ENCODE measurements at regions of chr1 and their contacts with region 1.

Region 1: DNA sequence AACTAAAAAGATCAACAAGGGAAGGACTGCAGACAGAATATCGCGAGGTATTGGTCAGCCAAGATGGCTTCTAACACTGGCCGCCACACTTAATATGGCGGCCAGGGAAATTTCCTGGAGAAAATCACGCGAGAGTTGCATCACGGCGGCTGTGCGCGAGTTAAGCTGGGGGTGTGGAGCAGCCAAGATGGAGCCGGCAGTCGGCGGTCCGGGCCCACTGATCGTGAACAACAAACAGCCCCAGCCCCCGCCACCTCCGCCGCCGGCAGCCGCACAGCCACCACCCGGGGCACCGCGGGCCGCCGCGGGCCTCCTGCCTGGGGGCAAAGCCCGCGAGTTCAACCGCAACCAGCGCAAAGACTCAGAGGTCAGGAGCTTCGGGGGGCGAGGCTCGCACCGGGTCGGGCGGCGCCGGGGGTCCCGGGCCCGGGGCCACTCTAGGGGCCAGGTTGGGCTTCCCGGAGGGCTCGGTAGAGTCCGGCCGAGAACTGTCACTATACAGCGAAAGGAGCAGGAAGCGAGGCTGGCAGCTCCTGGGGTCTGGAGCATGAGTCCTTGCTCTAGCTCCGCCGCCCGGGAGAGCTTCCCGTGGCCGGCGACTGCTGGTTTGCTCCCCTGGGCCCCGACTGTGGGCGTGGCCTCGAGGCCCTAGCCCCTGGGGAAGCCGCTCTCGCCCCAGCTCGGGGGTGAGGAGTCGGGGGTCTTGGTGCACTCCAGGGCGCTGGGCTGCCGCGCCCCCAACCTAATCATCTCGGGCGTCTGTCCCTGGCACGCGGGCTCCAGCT is at the start of gene STRIP1:
- DNase-seq: peak; percentile 96
- ATAC-seq: peak; percentile 93
- H3K4me3 ChIP-seq: peak within 1 kb of the TSS; percentile 71 to 99 (median 93)
- H3K4me3 Mint-ChIP-seq: peak within 1 kb of the TSS; percentile 97
- H3K27ac ChIP-seq: peak within 1 kb of the TSS; percentile 76 to 95
- H3K27ac Mint-ChIP-seq: peak within 1 kb of the TSS; percentile 93
- H3K4me1 ChIP-seq: peaks cover 25 to 31% of the 10 kb centered on the region in 2 donors
- H3K4me1 Mint-ChIP-seq: peaks cover 43% of the 10 kb centered on the region
- H3K27me3 ChIP-seq: no peaks in the 10 kb centered on the region
- H3K27me3 Mint-ChIP-seq: no peaks in the 10 kb centered on the region
- CTCF ChIP-seq: no peak
- total RNA-seq, gene STRIP1: 97.5 and 105 TPM in 2 replicates

Region 2: GRCh38 chr1:109548321-109549267 is 486.0 kb before region 1 on chr1 and contains the start of gene GNAI3:
- CTCF ChIA-PET with region 1: interaction called, 5 read pairs
- POLR2A ChIA-PET with region 1: interaction called, 3 read pairs
- intact Hi-C with region 1: loop called (anchors 1 kb)
- DNase-seq: peak; percentile 97
- ATAC-seq: peak; percentile 87
- H3K4me3 ChIP-seq: peak within 1 kb of the TSS; percentile 84 to 95 (median 92)
- H3K4me3 Mint-ChIP-seq: peak within 1 kb of the TSS; percentile 99
- H3K27ac ChIP-seq: peak within 1 kb of the TSS; percentile 93 to 96
- H3K27ac Mint-ChIP-seq: peak within 1 kb of the TSS; percentile 99
- H3K4me1 ChIP-seq: peaks cover 25 to 33% of the 10 kb centered on the region in 2 donors
- H3K4me1 Mint-ChIP-seq: peaks cover 55% of the 10 kb centered on the region
- H3K27me3 ChIP-seq: no peaks in the 10 kb centered on the region
- H3K27me3 Mint-ChIP-seq: no peaks in the 10 kb centered on the region
- CTCF ChIP-seq: no peak
- total RNA-seq, gene GNAI3: 8.5 and 8.8 TPM in 2 replicates

Region 3: DNA sequence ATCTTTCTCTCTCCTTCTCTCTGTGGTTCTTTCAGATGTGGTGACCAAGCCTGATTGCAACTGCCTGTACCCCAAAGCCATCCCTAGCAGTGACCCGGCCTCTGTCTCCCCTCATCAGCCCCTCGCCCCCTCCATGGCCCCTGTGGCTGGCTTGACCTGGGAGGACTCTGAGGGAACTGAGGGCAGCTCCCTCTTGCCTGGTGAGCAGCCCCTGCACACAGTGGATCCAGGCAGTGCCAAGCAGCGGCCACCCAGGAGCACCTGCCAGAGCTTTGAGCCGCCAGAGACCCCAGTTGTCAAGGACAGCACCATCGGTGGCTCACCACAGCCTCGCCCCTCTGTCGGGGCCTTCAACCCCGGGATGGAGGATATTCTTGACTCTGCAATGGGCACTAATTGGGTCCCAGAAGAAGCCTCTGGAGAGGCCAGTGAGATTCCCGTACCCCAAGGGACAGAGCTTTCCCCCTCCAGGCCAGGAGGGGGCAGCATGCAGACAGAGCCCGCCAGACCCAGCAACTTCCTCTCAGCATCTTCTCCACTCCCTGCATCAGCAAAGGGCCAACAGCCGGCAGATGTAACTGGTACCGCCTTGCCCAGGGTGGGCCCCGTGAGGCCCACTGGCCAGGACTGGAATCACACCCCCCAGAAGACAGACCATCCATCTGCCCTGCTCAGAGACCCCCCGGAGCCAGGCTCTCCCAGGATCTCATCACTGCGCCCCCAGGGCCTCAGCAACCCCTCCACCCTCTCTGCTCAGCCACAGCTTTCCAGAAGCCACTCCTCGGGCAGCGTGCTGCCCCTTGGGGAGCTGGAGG is 111.3 kb before region 1 on chr1:
- CTCF ChIA-PET with region 1: no interaction called
- POLR2A ChIA-PET with region 1: no interaction called
- intact Hi-C with region 1: no loop called
- DNase-seq: no peak
- ATAC-seq: no peak
- H3K4me3 ChIP-seq: no peak overlapping the region
- H3K4me3 Mint-ChIP-seq: no peak overlapping the region
- H3K27ac ChIP-seq: no peak overlapping the region
- H3K27ac Mint-ChIP-seq: no peak overlapping the region
- H3K4me1 ChIP-seq: no peaks in the 10 kb centered on the region
- H3K4me1 Mint-ChIP-seq: no peaks in the 10 kb centered on the region
- H3K27me3 ChIP-seq: no peaks in the 10 kb centered on the region
- H3K27me3 Mint-ChIP-seq: peaks cover 3% of the 10 kb centered on the region
- CTCF ChIP-seq: no peak

Region 4: GRCh38 chr1:109993885-109994284 is 40.8 kb before region 1 on chr1:
- CTCF ChIA-PET with region 1: no interaction called
- POLR2A ChIA-PET with region 1: no interaction called
- intact Hi-C with region 1: no loop called
- DNase-seq: no peak
- ATAC-seq: no peak
- H3K4me3 ChIP-seq: no peak overlapping the region
- H3K4me3 Mint-ChIP-seq: no peak overlapping the region
- H3K27ac ChIP-seq: no peak overlapping the region
- H3K27ac Mint-ChIP-seq: no peak overlapping the region
- H3K4me1 ChIP-seq: peaks cover 4 to 7% of the 10 kb centered on the region in 2 donors
- H3K4me1 Mint-ChIP-seq: peaks cover 21% of the 10 kb centered on the region
- H3K27me3 ChIP-seq: no peaks in the 10 kb centered on the region
- H3K27me3 Mint-ChIP-seq: no peaks in the 10 kb centered on the region
- CTCF ChIP-seq: no peak

Region 5: DNA sequence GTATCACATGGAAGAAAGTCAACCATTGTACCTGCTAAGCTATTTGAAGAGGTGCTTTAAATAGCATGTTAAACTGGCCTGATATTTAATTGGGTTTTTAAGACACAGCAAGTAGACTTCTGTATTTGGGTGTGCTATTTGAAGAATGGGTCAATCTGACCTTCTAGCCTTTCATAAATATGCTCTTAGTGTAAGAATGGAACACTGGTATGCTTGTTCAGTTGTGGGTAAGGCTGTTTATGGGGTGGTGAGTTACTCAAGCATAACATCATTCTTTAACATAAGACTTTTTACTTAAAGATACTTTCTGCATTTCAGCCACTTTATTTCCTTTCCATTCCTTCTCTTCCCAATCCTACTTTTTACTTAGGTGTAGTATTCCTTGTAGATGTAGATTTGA is 28.7 kb before region 1 on chr1:
- CTCF ChIA-PET with region 1: interaction called, 52 read pairs
- POLR2A ChIA-PET with region 1: interaction called, 26 read pairs
- intact Hi-C with region 1: loop called (anchors 1 kb)
- DNase-seq: no peak
- ATAC-seq: no peak
- H3K4me3 ChIP-seq: no peak overlapping the region
- H3K4me3 Mint-ChIP-seq: no peak overlapping the region
- H3K27ac ChIP-seq: no peak overlapping the region
- H3K27ac Mint-ChIP-seq: peak overlapping the region; percentile 56
- H3K4me1 ChIP-seq: peaks cover 17% of the 10 kb centered on the region in 2 donors
- H3K4me1 Mint-ChIP-seq: peaks cover 47% of the 10 kb centered on the region
- H3K27me3 ChIP-seq: no peaks in the 10 kb centered on the region
- H3K27me3 Mint-ChIP-seq: no peaks in the 10 kb centered on the region
- CTCF ChIP-seq: no peak

Region 6: DNA sequence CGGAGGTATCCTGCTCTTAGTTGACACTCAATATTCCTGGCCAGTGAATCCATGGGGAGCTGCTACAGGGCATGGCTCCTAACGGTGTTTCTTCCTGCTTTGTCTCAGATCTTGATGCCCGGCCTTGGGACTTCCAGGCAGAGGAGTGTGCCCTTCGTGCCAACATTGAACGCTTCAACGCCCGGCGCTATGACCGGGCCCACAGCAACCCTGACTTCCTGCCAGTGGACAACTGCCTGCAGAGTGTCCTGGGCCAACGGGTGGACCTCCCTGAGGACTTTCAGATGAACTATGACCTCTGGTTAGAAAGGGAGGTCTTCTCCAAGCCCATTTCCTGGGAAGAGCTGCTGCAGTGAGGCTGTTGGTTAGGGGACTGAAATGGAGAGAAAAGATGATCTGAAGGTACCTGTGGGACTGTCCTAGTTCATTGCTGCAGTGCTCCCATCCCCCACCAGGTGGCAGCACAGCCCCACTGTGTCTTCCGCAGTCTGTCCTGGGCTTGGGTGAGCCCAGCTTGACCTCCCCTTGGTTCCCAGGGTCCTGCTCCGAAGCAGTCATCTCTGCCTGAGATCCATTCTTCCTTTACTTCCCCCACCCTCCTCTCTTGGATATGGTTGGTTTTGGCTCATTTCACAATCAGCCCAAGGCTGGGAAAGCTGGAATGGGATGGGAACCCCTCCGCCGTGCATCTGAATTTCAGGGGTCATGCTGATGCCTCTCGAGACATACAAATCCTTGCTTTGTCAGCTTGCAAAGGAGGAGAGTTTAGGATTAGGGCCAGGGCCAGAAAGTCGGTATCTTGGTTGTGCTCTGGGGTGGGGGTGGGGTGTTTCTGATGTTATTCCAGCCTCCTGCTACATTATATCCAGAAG is 19.1 kb after region 1 on chr1:
- CTCF ChIA-PET with region 1: interaction called, 67 read pairs
- POLR2A ChIA-PET with region 1: interaction called, 5 read pairs
- intact Hi-C with region 1: no loop called
- DNase-seq: peak; percentile 74
- ATAC-seq: peak; percentile 77
- H3K4me3 ChIP-seq: no peak overlapping the region
- H3K4me3 Mint-ChIP-seq: no peak overlapping the region
- H3K27ac ChIP-seq: no peak overlapping the region
- H3K27ac Mint-ChIP-seq: peak overlapping the region; percentile 21
- H3K4me1 ChIP-seq: no peaks in the 10 kb centered on the region
- H3K4me1 Mint-ChIP-seq: no peaks in the 10 kb centered on the region
- H3K27me3 ChIP-seq: no peaks in the 10 kb centered on the region
- H3K27me3 Mint-ChIP-seq: no peaks in the 10 kb centered on the region
- CTCF ChIP-seq: peak; percentile 97

Region 7: GRCh38 chr1:110407260-110408210 is 372.9 kb after region 1 on chr1 and contains the start of gene LAMTOR5:
- CTCF ChIA-PET with region 1: no interaction called
- POLR2A ChIA-PET with region 1: no interaction called
- intact Hi-C with region 1: loop called (anchors 1 kb)
- DNase-seq: peak; percentile 94
- ATAC-seq: peak; percentile 92
- H3K4me3 ChIP-seq: peak within 1 kb of the TSS; percentile 76 to 99 (median 90)
- H3K4me3 Mint-ChIP-seq: peak within 1 kb of the TSS; percentile 100
- H3K27ac ChIP-seq: peak within 1 kb of the TSS; percentile 87 to 90
- H3K27ac Mint-ChIP-seq: peak within 1 kb of the TSS; percentile 99
- H3K4me1 ChIP-seq: peaks cover 18 to 23% of the 10 kb centered on the region in 2 donors
- H3K4me1 Mint-ChIP-seq: peaks cover 25% of the 10 kb centered on the region
- H3K27me3 ChIP-seq: no peaks in the 10 kb centered on the region
- H3K27me3 Mint-ChIP-seq: no peaks in the 10 kb centered on the region
- CTCF ChIP-seq: peak; percentile 23
- total RNA-seq, gene LAMTOR5: 145 and 151 TPM in 2 replicates

Region 8: DNA sequence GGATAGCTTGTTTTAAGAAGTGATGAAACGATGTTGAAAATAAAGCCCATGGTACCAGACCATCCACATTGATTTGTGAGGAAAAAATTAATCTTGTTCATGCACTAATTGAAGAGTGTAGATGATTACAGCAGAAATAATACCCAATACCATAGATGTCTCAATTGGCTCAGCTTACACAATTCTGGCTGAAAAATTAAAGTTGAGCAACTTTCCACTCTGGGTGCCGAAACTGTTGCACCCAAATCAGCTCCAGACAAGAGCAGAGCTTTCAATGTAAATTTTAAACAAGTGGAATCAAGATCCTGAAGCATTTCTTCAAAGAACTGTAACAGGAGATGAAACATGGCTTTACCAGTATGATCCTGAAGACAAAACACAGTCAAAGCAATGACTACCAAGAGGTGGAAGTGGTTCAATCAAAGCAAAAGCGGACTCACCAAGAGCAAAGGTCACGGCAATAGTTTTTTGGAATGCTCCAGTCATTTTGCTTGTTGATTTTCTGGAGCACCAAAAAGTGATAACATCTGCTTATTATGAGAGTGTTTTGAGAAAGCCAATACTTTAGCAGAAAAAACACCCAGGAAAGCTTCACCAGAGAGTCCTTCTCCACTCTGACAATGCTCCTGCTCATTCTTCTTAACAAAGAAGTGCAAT is 656.2 kb after region 1 on chr1:
- CTCF ChIA-PET with region 1: no interaction called
- POLR2A ChIA-PET with region 1: no interaction called
- intact Hi-C with region 1: no loop called
- DNase-seq: no peak
- ATAC-seq: no peak
- H3K4me3 ChIP-seq: no peak overlapping the region
- H3K4me3 Mint-ChIP-seq: no peak overlapping the region
- H3K27ac ChIP-seq: no peak overlapping the region
- H3K27ac Mint-ChIP-seq: no peak overlapping the region
- H3K4me1 ChIP-seq: no peaks in the 10 kb centered on the region
- H3K4me1 Mint-ChIP-seq: peaks cover 3% of the 10 kb centered on the region
- H3K27me3 ChIP-seq: no peaks in the 10 kb centered on the region
- H3K27me3 Mint-ChIP-seq: peaks cover 10% of the 10 kb centered on the region
- CTCF ChIP-seq: no peak